Cardiac septum (tissue), 1 donor: ENCODE measurements at regions of chr15 and their contacts with region 1.

Region 1: GRCh38 chr15:42273102-42273899 is at the starts of genes GANC and TMEM87A:
- DNase-seq: peak; percentile 99
- total RNA-seq, gene GANC: 20.3 TPM
- total RNA-seq, gene TMEM87A: 21.0 TPM

Region 2: DNA sequence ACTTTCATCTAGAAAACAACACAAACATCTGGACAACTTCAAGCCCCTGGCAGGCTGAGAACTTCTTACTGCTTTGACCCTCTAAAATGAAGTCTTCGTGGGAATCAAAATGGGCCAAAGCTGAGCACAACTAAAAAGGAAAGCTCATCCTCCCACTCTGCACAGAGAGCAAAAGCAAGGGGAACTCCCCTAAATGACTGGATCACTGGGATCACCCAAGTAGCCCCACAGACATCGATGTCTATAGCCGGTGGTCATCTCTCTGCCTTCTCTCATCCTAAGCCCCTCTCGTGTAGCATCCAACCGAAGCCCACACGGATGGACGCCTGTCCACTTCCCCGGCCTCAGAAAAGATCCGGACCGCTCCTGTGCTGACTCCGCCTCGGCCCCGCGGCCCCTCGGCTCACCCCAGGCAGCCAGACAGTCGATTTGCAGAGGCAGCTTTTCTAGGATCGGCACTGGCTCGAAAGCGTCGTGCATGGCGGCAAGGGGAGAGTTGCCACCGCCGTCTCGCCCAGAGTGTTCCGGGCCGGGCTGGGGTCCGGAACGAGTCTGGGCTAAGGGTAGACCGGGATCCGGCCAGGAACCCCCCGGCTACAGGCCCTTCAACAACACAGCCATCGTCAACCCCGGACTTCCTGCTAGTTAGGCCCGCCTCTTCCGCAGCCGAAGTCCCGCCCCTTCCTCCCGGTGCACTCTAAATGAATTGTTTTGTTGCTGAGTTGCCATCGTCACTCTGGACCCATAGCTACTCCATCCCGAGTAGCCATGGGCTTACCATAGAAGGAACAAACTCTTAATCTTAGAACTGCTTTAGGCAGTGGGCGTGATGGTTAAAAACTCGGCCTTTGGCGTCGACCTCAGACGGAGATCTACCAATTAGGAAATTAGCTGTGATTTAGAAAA is 65.4 kb before region 1 on chr15 and contains the start of gene VPS39:
- intact Hi-C with region 1: loop called (anchors 5 kb)
- DNase-seq: peak; percentile 93
- total RNA-seq, gene VPS39: 49.3 TPM

Region 3: GRCh38 chr15:42457445-42458442 is 184.4 kb after region 1 on chr15:
- intact Hi-C with region 1: loop called (anchors 2 kb)
- DNase-seq: peak; percentile 90